ENCODE measurements at regions of chr5 and their contacts with region 1.

Region 1: DNA sequence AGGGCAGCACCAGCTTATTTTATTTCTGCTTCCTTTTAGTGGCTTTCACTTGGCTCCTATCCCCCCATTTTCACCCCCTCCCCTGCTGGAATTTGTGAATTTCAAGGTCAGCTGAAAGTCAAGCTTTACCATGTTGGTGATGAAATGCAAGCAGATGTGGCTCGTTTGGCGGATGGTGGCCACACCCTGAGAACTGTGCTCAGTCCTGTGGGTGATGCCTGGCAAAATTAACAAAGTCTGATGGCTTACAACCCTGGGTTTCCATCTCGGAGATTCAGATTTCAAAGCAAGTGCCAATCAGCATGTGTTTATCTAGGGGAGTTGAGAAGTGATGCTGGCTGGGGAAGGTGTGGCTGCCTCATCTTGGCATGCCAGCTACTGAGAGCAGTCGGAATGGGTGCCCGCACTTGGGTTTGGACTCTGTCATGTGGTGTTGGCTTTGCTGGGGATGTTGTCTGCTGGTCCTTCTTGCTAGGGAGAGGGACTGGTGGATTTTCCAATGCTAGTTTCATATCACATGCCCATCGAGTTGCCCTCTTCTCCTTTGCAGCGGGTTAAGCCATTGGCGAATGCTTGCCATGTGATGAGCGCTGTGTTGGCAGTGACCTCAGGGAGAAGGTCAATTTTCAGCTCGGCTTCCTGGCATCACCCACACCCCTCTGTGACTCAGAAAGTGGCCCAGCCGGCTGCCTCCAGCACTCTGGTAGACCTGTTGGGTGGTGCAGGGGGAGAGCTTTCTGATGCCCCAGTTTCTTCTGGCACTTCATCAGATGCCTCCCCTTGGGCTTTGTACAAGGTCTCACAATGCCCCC is 77.0 kb upstream of the PITX1 start:
- DNase-seq: no peak
- ATAC-seq: peak; percentile 36; the same call in 1 of the 2 replicates
- H3K4me3 ChIP-seq: no peak overlapping the region
- H3K27ac ChIP-seq: no peak overlapping the region
- H3K4me1 ChIP-seq: peaks cover 0 to 15% of the 10 kb centered on the region in 2 experiments; a peak in 1 of 4 replicates
- H3K27me3 ChIP-seq: no peaks in the 10 kb centered on the region
- CTCF ChIP-seq: no peak
- POLR2A ChIP-seq: no peak
- RAD21 ChIP-seq: no peak; the same call in 1 of the 2 replicates

Region 2: DNA sequence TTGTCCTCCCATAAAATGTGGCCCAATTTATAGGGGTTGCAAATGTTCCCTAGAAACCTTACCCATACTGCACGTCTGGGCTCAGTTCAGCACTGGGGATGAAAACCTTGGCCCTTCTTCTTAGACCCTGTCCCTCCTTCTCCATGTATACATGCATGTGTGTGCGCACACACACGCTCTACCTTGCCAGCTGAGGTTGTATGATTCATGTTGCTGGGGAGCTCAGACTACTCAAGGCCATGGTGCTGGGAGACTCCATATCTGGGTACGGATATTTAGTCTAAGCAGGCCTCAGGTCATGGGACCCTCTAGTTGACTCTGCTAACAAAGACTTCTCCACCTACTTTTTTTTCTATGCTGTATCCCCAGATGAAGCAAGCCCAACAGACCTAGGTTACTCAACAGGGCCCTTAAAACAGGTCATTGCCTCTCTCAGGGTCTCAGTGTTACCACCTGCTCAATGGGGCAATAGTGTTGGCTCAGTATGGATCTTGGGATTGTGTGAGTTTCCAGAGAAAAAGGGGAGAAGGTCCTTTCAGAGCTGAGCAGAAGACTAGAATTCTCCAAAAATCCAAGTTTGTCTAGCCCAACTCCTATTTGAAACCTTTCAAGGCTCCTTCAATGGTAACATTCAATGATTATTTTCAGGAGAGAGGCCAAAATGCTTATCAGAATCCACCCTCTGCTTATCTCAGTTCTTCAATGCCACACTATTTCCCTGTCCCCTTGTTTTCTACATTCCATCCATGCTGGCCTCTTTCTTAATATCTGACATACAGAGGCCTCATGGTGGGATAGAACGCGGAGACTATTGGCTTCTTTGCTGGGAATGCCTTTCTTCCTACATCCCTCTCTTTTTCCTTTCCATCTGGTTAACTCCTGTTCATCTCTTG is 46.7 kb after region 1 on chr5:
- CTCF ChIA-PET with region 1: no interaction called
- POLR2A ChIA-PET with region 1: no interaction called
- RAD21 ChIA-PET with region 1: no interaction called
- intact Hi-C with region 1: loop called (anchors 1 kb)
- DNase-seq: no peak
- ATAC-seq: no peak
- H3K4me3 ChIP-seq: no peak overlapping the region
- H3K27ac ChIP-seq: no peak overlapping the region
- H3K4me1 ChIP-seq: peaks cover 0 to 11% of the 10 kb centered on the region in 2 experiments; a peak in 1 of 4 replicates
- H3K27me3 ChIP-seq: no peaks in the 10 kb centered on the region
- CTCF ChIP-seq: no peak
- POLR2A ChIP-seq: no peak
- RAD21 ChIP-seq: no peak

Measured in HCT116 (cell line).